ENCODE measurements at regions of chr15 and their contacts with region 1.

Region 1: DNA sequence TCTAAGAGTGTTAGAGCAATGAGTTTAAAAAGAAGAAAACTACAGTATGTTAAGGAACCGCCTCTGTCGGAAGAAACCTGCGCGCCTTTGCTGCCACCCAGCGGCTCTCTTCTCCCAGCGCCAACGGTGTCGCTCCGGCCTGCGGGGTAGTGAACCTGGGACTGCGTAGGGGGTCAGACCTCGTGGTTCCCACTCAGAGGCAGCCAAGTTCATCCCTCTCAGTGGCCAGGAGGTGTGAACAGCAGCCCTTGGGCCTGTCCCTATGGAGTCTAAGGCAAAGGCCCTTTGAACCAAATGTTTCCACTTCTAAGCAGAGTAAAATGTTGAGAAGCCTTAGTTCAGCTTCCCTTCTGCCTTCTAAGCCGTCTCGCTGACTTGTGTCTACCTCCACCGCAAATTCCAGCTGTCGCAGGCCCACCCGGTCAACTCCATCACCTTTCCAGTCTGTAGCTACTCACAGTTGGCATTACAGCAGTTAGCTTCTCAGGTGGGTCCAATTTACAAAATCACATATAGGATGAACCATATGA is 980 bp upstream of the RAB27A start:
- DNase-seq: peak; percentile 92
- H3K4me3 Mint-ChIP-seq: peak overlapping the region; percentile 93
- H3K27ac Mint-ChIP-seq: peak overlapping the region; percentile 97
- H3K4me1 Mint-ChIP-seq: peaks cover 29% of the 10 kb centered on the region
- H3K27me3 Mint-ChIP-seq: no peaks in the 10 kb centered on the region

Region 2: DNA sequence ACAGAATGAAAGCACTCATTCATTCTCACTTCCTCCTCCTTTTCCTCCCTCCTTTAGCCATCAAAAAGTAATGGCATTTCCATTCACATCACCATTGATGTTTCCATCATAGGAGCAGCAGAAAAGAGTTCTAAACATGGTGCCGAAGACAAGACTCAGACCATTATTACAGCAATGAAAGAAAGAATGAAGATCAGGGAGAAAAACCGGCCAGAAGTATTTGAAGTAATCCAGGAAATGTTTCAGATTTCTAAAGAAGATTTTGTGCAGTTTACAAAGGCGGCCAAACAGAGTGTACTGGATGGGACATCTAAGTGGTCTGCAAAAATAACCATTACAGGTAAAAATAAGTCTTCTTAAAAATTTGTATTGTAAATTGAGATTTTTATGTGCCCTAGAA is 1026.5 kb before region 1 on chr15:
- CTCF ChIA-PET with region 1: no interaction called
- POLR2A ChIA-PET with region 1: no interaction called
- intact Hi-C with region 1: no loop called
- DNase-seq: no peak
- H3K4me3 Mint-ChIP-seq: no peak overlapping the region
- H3K27ac Mint-ChIP-seq: no peak overlapping the region
- H3K4me1 Mint-ChIP-seq: no peaks in the 10 kb centered on the region
- H3K27me3 Mint-ChIP-seq: no peaks in the 10 kb centered on the region

Region 3: GRCh38 chr15:55196458-55197361 is 93.9 kb before region 1 on chr15 and contains the start of gene RSL24D1:
- CTCF ChIA-PET with region 1: interaction called, 12 read pairs
- POLR2A ChIA-PET with region 1: interaction called, 4 read pairs
- intact Hi-C with region 1: loop called (anchors 1 kb)
- DNase-seq: peak; percentile 98
- H3K4me3 Mint-ChIP-seq: no peak within 1 kb of the TSS
- H3K27ac Mint-ChIP-seq: no peak within 1 kb of the TSS
- H3K4me1 Mint-ChIP-seq: peaks cover 22% of the 10 kb centered on the region
- H3K27me3 Mint-ChIP-seq: no peaks in the 10 kb centered on the region
- total RNA-seq, gene RSL24D1: 157 to 163 TPM

Region 4: GRCh38 chr15:55267401-55268175 is 23.0 kb before region 1 on chr15:
- CTCF ChIA-PET with region 1: no interaction called
- POLR2A ChIA-PET with region 1: no interaction called
- intact Hi-C with region 1: loop called (anchors 1 kb)
- DNase-seq: peak; percentile 83
- H3K4me3 Mint-ChIP-seq: peak overlapping the region; percentile 62
- H3K27ac Mint-ChIP-seq: peak overlapping the region; percentile 90
- H3K4me1 Mint-ChIP-seq: peaks cover 73% of the 10 kb centered on the region
- H3K27me3 Mint-ChIP-seq: no peaks in the 10 kb centered on the region

Region 5: GRCh38 chr15:55318588-55319494 is 28.2 kb after region 1 on chr15 and contains the starts of genes PIGB and PIGBOS1:
- CTCF ChIA-PET with region 1: interaction called, 3 read pairs
- POLR2A ChIA-PET with region 1: interaction called, 5 read pairs
- intact Hi-C with region 1: loop called (anchors 2 kb)
- DNase-seq: peak; percentile 87
- H3K4me3 Mint-ChIP-seq: peak within 1 kb of the TSS; percentile 97
- H3K27ac Mint-ChIP-seq: peak within 1 kb of the TSS; percentile 98
- H3K4me1 Mint-ChIP-seq: peaks cover 48% of the 10 kb centered on the region
- H3K27me3 Mint-ChIP-seq: no peaks in the 10 kb centered on the region
- total RNA-seq, gene PIGB: 18.0 to 18.9 TPM
- total RNA-seq, gene PIGBOS1: 10.5 to 11.1 TPM

Region 6: GRCh38 chr15:55402707-55403106 is 112.1 kb after region 1 on chr15:
- CTCF ChIA-PET with region 1: no interaction called
- POLR2A ChIA-PET with region 1: no interaction called
- intact Hi-C with region 1: no loop called
- DNase-seq: no peak
- H3K4me3 Mint-ChIP-seq: no peak overlapping the region
- H3K27ac Mint-ChIP-seq: peak overlapping the region; percentile 60
- H3K4me1 Mint-ChIP-seq: peaks cover 41% of the 10 kb centered on the region
- H3K27me3 Mint-ChIP-seq: no peaks in the 10 kb centered on the region

Region 7: GRCh38 chr15:55434989-55435825 is 144.6 kb after region 1 on chr15:
- CTCF ChIA-PET with region 1: interaction called, 10 read pairs
- POLR2A ChIA-PET with region 1: no interaction called
- intact Hi-C with region 1: loop called (anchors 1 kb)
- DNase-seq: no peak
- H3K4me3 Mint-ChIP-seq: no peak overlapping the region
- H3K27ac Mint-ChIP-seq: no peak overlapping the region
- H3K4me1 Mint-ChIP-seq: peaks cover 6% of the 10 kb centered on the region
- H3K27me3 Mint-ChIP-seq: peaks cover 1% of the 10 kb centered on the region

Measured in activated CD4-positive, alpha-beta memory T cell treated with anti-CD3 and anti-CD28 coated beads for 36 hours (primary cell).